ENCODE measurements at regions of chr7 and their contacts with region 1.

Region 1: DNA sequence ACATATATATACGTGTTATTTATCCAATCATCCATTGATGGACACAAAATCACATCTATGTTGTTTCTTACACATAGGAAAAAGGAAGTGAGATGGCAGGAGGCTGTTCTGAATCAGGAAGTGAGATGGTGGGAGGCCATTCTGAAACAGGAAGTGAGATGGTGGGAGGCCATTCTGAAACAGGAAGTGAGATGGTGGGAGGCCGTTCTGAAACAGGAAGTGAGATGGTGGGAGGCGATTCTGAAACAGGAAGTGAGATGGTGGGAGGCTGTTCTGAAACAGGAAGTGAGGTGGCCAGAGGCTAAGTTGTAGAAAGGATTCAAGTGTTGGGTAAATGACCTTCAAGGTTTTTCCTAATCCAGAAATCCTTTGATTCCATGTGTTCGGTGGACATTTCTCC is 921.5 kb downstream of the TYW1 start:
- DNase-seq: peak; percentile 91
- H3K4me3 ChIP-seq: no peak overlapping the region
- H3K27ac ChIP-seq: peak overlapping the region; percentile 78
- H3K4me1 ChIP-seq: peaks cover 17% of the 10 kb centered on the region
- H3K27me3 ChIP-seq: no peaks in the 10 kb centered on the region
- CTCF ChIP-seq: no peak

Region 2: GRCh38 chr7:67635271-67635670 is 282.9 kb before region 1 on chr7:
- CTCF ChIA-PET with region 1: no interaction called
- POLR2A ChIA-PET with region 1: no interaction called
- intact Hi-C with region 1: no loop called
- DNase-seq: no peak
- H3K4me3 ChIP-seq: no peak overlapping the region
- H3K27ac ChIP-seq: no peak overlapping the region
- H3K4me1 ChIP-seq: no peaks in the 10 kb centered on the region
- H3K27me3 ChIP-seq: no peaks in the 10 kb centered on the region
- CTCF ChIP-seq: no peak

Region 3: DNA sequence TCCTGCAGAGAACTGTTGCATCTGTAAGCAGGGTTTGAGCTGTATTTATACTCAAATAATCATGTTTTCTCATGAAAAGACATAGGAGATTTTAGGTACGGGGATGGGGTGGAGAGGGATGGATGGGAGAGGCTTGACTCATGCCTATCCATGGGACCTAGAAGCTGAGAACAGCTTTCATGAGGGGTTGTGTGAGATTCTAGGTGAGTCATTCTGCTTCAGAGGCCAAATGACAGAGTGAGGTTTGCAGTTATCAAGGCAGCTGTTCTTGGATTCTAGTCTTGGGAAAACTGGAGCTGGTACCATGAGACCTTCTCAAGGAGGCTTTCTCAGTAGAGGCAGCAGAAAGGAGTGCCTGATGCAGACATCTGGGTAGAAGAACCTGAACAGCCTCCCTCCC is 174.7 kb before region 1 on chr7:
- CTCF ChIA-PET with region 1: no interaction called
- POLR2A ChIA-PET with region 1: no interaction called
- intact Hi-C with region 1: loop called (anchors 10 kb)
- DNase-seq: no peak
- H3K4me3 ChIP-seq: no peak overlapping the region
- H3K27ac ChIP-seq: no peak overlapping the region
- H3K4me1 ChIP-seq: peaks cover 8% of the 10 kb centered on the region
- H3K27me3 ChIP-seq: no peaks in the 10 kb centered on the region
- CTCF ChIP-seq: no peak

Region 4: GRCh38 chr7:68269405-68269804 is 351.2 kb after region 1 on chr7:
- CTCF ChIA-PET with region 1: no interaction called
- POLR2A ChIA-PET with region 1: no interaction called
- intact Hi-C with region 1: no loop called
- DNase-seq: no peak
- H3K4me3 ChIP-seq: no peak overlapping the region
- H3K27ac ChIP-seq: no peak overlapping the region
- H3K4me1 ChIP-seq: no peaks in the 10 kb centered on the region
- H3K27me3 ChIP-seq: no peaks in the 10 kb centered on the region
- CTCF ChIP-seq: no peak

Measured in A673 (cell line).